K562 (cell line): ENCODE measurements at regions of chr6 and their contacts with region 1.

Region 1: DNA sequence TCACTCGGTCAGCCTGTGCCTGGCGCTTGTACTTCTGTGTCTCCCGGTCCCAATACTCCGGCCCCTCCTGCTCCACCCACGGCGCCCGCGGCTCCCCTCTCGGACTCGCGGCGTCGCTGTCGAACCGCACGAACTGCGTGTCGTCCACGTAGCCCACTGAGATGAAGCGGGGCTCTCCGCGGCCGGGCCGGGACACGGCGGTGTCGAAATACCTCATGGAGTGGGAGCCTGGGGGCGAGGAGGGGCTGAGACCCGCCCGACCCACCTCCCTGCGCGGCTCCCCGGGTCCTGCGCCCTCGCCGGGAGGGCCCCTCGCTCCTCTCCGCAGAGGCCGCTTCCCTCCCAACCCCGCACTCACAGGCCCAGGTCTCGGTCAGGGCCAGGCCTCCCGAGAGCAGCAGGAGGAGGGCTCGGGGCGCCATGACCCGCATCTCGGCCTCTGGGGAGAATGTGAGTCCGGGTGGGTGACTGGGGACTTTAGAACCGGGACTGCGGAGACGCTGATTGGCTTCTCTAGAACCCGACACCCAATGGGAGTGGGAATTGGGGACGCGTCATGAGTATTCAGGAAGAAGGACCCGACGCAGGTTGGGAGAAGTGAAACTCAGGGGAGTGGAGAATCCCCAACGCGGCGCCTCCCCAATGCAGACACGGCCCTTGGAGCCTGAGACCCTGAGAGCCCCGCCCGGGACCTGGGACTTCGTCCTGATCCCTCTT is at the start of gene HLA-C:
- DNase-seq: peak; percentile 52 to 83 (median 62)
- ATAC-seq: peak; percentile 98
- H3K4me3 ChIP-seq: peak within 1 kb of the TSS; percentile 29
- H3K27ac ChIP-seq: no peak within 1 kb of the TSS
- H3K4me1 ChIP-seq: peaks cover 0 to 10% of the 10 kb centered on the region in 2 experiments; a peak in 2 of 5 replicates
- H3K27me3 ChIP-seq: peaks cover 3 to 16% of the 10 kb centered on the region in 2 experiments; a peak in 4 of 5 replicates
- CTCF ChIP-seq: 0 out of 6 replicates have a peak, but pooled peaks of 1 of the 3 experiments have one; percentile 4
- EP300 ChIP-seq: no peak
- POLR2A ChIP-seq: no peak
- RAD21 ChIP-seq: no peak
- polyA plus RNA-seq, gene HLA-C: 0.23 to 0.25 TPM

Region 2: GRCh38 chr6:29632789-29633533 is 1638.8 kb before region 1 on chr6 and contains the start of gene GABBR1:
- CTCF ChIA-PET with region 1: no interaction called
- POLR2A ChIA-PET with region 1: no interaction called
- in situ Hi-C with region 1: no loop called
- intact Hi-C with region 1: no loop called
- DNase-seq: peak; percentile 94 to 99 (median 98)
- ATAC-seq: peak; percentile 87
- H3K4me3 ChIP-seq: peak within 1 kb of the TSS; percentile 84
- H3K27ac ChIP-seq: peak within 1 kb of the TSS; percentile 77
- H3K4me1 ChIP-seq: peaks cover 32 to 44% of the 10 kb centered on the region in 2 experiments; a peak in 4 of 5 replicates
- H3K27me3 ChIP-seq: no peaks in the 10 kb centered on the region
- CTCF ChIP-seq: no peak
- EP300 ChIP-seq: no peak
- POLR2A ChIP-seq: peak; percentile 60
- RAD21 ChIP-seq: no peak
- polyA plus RNA-seq, gene GABBR1: 2.2 to 2.4 TPM

Region 3: GRCh38 chr6:31351401-31352309 is 79.9 kb after region 1 on chr6:
- CTCF ChIA-PET with region 1: no interaction called
- POLR2A ChIA-PET with region 1: interaction called, 6 read pairs
- in situ Hi-C with region 1: loop called (anchors 5 kb)
- intact Hi-C with region 1: loop called (anchors 2 kb)
- DNase-seq: no peak
- ATAC-seq: no peak
- H3K4me3 ChIP-seq: no peak overlapping the region
- H3K27ac ChIP-seq: no peak overlapping the region
- H3K4me1 ChIP-seq: peaks cover 0 to 8% of the 10 kb centered on the region in 2 experiments; a peak in 2 of 5 replicates
- H3K27me3 ChIP-seq: peaks cover 24 to 41% of the 10 kb centered on the region in 2 experiments
- CTCF ChIP-seq: no peak
- EP300 ChIP-seq: no peak
- POLR2A ChIP-seq: no peak
- RAD21 ChIP-seq: no peak

Region 4: GRCh38 chr6:31356946-31357466 is 85.2 kb after region 1 on chr6 and contains the start of gene HLA-B:
- CTCF ChIA-PET with region 1: no interaction called
- POLR2A ChIA-PET with region 1: interaction called, 6 read pairs
- in situ Hi-C with region 1: loop called (anchors 5 kb)
- intact Hi-C with region 1: loop called (anchors 2 kb)
- DNase-seq: peak in 2 of 4 experiments; percentile 9 to 31
- ATAC-seq: peak; percentile 88
- H3K4me3 ChIP-seq: no peak within 1 kb of the TSS
- H3K27ac ChIP-seq: no peak within 1 kb of the TSS
- H3K4me1 ChIP-seq: peaks cover 0 to 12% of the 10 kb centered on the region in 2 experiments; a peak in 2 of 5 replicates
- H3K27me3 ChIP-seq: peaks cover 23 to 37% of the 10 kb centered on the region in 2 experiments
- CTCF ChIP-seq: no peak
- EP300 ChIP-seq: no peak
- POLR2A ChIP-seq: no peak
- RAD21 ChIP-seq: no peak
- polyA plus RNA-seq, gene HLA-B: 0.07 to 0.66 TPM

Region 5: GRCh38 chr6:31525932-31526591 is 254.3 kb after region 1 on chr6:
- CTCF ChIA-PET with region 1: no interaction called
- POLR2A ChIA-PET with region 1: no interaction called
- in situ Hi-C with region 1: no loop called
- intact Hi-C with region 1: no loop called
- DNase-seq: peak in 3 of 4 experiments; percentile 45 to 62 (median 56)
- ATAC-seq: peak; percentile 38
- H3K4me3 ChIP-seq: no peak overlapping the region
- H3K27ac ChIP-seq: peak overlapping the region; percentile 66; the same call in 2 of the 3 replicates
- H3K4me1 ChIP-seq: peaks cover 10 to 20% of the 10 kb centered on the region in 2 experiments
- H3K27me3 ChIP-seq: no peaks in the 10 kb centered on the region
- CTCF ChIP-seq: no peak
- EP300 ChIP-seq: no peak
- POLR2A ChIP-seq: no peak
- RAD21 ChIP-seq: no peak